ENCODE measurements at regions of chr3 and their contacts with region 1.

Region 1: GRCh38 chr3:95319921-95320494 is 1257.1 kb downstream of the NSUN3 start:
- DNase-seq: no peak
- H3K4me3 ChIP-seq: no peak overlapping the region
- H3K27ac ChIP-seq: no peak overlapping the region
- H3K4me1 ChIP-seq: no peaks in the 10 kb centered on the region
- H3K27me3 ChIP-seq: no peaks in the 10 kb centered on the region
- CTCF ChIP-seq: no peak
- POLR2A ChIP-seq: no peak

Region 2: GRCh38 chr3:94787734-94788270 is 532.2 kb before region 1 on chr3:
- intact Hi-C with region 1: no loop called
- DNase-seq: no peak
- H3K4me3 ChIP-seq: no peak overlapping the region
- H3K27ac ChIP-seq: no peak overlapping the region
- H3K4me1 ChIP-seq: no peaks in the 10 kb centered on the region
- H3K27me3 ChIP-seq: no peaks in the 10 kb centered on the region
- CTCF ChIP-seq: no peak
- POLR2A ChIP-seq: no peak

Region 3: DNA sequence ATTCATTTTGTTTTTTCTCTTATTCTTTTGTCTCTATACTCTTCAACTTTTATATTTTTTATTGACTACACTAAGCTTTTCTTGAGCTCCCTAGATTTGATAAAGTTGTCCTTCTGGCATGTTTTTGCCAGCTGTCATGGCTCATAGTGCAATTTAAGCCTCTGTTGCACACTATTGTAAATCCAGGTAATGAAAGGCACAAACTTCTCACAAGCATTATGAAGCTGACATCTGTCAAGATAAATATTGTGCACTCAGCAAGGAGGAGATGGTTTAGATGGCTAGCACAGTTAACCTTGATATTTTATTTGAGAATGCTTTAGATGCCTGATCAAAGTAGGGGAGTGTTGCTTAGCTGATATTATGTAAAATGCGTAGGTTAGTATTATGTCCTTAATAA is 23.8 kb after region 1 on chr3:
- intact Hi-C with region 1: loop called (anchors 2 kb)
- DNase-seq: no peak
- H3K4me3 ChIP-seq: no peak overlapping the region
- H3K27ac ChIP-seq: no peak overlapping the region
- H3K4me1 ChIP-seq: no peaks in the 10 kb centered on the region
- H3K27me3 ChIP-seq: no peaks in the 10 kb centered on the region
- CTCF ChIP-seq: no peak
- POLR2A ChIP-seq: no peak